Dendritic cell treated with granulocyte-macrophage colony-stimulating factor and Interleukin-4, amounts not matched to agents 40 ng/mL and 50 ng/mL, for 4 days (primary cell): ENCODE measurements at regions of chr18 and their contacts with region 1.

Region 1: DNA sequence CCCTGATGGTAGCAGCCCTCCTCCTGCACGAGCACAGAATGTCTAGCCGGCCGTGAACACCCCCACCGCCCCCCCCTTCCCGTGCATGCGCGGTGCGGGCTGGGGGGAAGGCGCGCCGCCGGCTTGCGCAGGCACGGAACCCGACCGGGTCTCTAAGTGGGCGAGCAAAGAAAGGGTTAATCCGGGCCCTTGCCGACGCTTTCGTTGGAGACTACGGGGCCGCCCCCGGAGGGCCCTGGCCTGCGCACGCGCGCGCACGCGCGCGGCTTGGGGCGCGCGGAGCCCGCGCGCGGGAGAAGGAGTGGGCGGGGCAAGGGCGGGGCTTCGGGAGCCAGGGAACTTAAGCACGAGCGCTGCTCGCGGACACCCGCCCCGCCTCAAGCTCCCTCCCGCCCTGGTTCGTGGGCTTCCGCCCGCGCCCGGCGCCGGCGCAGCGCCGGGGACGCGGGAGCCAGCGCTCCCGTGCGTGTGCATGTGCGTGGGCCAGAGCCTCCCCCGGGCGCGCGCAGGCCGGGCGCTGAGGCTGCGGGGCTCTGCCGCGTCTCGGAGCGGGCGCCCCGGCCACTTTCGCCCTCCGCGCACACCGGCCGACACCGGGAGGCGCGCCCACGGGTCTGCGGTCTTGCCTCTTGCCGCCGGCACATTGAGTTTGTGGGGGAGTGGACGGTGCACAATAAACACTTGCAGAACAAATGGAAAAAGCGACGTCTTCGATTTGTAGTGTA is 617 bp upstream of the ZBTB14 start:
- H3K4me3 Mint-ChIP-seq: peak overlapping the region; percentile 92
- H3K27ac Mint-ChIP-seq: peak overlapping the region; percentile 99
- H3K4me1 Mint-ChIP-seq: peaks cover 31% of the 10 kb centered on the region
- H3K27me3 Mint-ChIP-seq: no peaks in the 10 kb centered on the region

Region 2: GRCh38 chr18:5137261-5137660 is 158.9 kb before region 1 on chr18:
- intact Hi-C with region 1: no loop called
- H3K4me3 Mint-ChIP-seq: no peak overlapping the region
- H3K27ac Mint-ChIP-seq: no peak overlapping the region
- H3K4me1 Mint-ChIP-seq: no peaks in the 10 kb centered on the region
- H3K27me3 Mint-ChIP-seq: no peaks in the 10 kb centered on the region

Region 3: DNA sequence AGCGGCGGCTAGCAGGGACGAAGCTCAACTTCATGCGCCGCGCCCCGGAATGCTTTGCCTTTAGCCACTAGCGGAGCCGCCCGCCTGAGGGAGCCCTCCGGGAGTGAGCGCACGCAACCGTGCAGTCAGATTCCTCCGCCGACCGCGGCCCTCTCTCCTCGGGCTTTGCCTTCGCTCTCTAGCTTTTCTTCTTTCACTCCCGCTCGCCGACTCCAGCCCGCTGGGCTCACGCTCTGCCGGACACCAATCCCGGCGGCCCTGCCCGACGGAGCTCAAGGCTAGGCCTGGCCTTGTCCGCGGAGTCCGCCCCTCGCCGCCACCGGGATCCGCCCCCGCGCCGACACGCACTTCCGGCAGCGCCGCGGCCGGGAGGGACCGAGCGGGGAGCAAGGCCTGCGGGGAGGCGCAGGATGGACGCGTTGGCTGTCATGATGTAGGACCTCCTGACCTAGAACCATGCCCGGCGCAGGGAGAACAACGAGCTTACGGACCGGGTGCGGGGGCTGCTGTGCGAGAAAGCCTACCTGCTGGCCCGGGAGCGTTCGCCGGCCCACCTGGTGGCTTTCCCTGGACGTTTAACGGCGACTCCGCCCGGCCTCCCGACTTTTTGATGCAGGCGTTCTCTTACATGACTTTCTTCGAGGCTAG is 58.3 kb before region 1 on chr18:
- intact Hi-C with region 1: loop called (anchors 1 kb)
- H3K4me3 Mint-ChIP-seq: peak overlapping the region; percentile 96
- H3K27ac Mint-ChIP-seq: peak overlapping the region; percentile 100
- H3K4me1 Mint-ChIP-seq: peaks cover 23% of the 10 kb centered on the region
- H3K27me3 Mint-ChIP-seq: peaks cover 12% of the 10 kb centered on the region

Region 4: GRCh38 chr18:5417342-5417741 is 121.2 kb after region 1 on chr18:
- intact Hi-C with region 1: loop called (anchors 10 kb)
- H3K4me3 Mint-ChIP-seq: peak overlapping the region; percentile 24
- H3K27ac Mint-ChIP-seq: peak overlapping the region; percentile 61
- H3K4me1 Mint-ChIP-seq: peaks cover 41% of the 10 kb centered on the region
- H3K27me3 Mint-ChIP-seq: no peaks in the 10 kb centered on the region

Region 5: GRCh38 chr18:5439986-5440696 is 144.0 kb after region 1 on chr18:
- intact Hi-C with region 1: loop called (anchors 10 kb)
- H3K4me3 Mint-ChIP-seq: no peak overlapping the region
- H3K27ac Mint-ChIP-seq: peak overlapping the region; percentile 79
- H3K4me1 Mint-ChIP-seq: peaks cover 40% of the 10 kb centered on the region
- H3K27me3 Mint-ChIP-seq: no peaks in the 10 kb centered on the region

Region 6: DNA sequence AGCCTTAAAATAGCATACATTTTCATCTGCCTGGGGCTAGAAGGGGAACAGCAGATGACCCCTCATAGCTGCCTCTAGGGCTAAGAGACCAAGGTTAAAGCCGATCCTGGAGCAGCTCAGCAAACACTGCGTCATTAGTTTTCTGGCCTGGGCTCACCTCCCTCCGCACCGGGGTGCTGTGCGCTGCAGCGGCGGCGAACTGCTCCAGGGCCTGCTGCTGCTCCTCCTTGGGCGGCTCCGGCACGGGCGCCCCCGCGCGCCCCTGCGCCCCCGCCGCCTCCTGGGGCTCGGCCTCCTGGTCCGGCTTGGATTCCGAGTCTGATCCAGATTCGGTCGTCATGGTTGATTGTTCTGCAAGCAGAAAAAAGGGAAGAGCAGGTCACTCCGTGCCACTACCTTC is 192.7 kb after region 1 on chr18:
- intact Hi-C with region 1: no loop called
- H3K4me3 Mint-ChIP-seq: no peak overlapping the region
- H3K27ac Mint-ChIP-seq: no peak overlapping the region
- H3K4me1 Mint-ChIP-seq: peaks cover 23% of the 10 kb centered on the region
- H3K27me3 Mint-ChIP-seq: no peaks in the 10 kb centered on the region

Region 7: DNA sequence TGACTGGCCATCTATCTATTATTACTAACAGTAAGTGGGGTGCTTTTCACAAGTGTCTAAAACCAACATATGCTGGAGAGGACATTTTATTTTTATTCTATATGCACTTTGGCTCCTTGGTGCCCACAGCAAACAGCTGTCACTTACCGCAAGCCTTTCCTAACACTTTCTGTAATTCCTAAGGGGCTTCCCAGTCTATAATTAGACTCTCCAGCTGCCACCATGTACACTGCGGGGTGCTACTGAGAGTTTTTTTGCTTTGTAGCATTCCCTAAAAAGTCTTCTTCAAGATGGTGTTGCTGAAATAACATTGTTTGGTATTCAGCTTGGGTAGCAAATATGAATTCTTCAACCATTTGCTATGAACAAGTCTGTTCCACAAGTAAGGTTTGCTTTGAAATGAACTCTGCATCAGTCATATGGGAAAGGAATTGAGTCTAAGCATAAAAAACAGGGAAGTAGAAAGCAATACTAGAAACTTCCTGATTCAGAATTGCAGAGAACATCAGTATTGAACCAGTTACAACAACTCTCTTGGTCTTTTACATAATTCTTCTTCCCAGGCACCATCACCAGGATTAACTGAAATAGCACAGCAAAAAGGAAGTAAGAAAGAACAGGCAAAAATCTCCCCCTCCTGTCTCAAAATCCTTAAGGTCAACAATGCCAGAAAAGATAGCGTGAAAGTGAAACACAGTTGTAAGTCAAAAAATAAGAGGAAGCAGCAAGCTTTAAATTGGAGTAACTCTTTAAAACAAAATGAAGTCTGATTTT is 219.1 kb after region 1 on chr18:
- intact Hi-C with region 1: loop called (anchors 10 kb)
- H3K4me3 Mint-ChIP-seq: peak overlapping the region; percentile 48
- H3K27ac Mint-ChIP-seq: peak overlapping the region; percentile 82
- H3K4me1 Mint-ChIP-seq: peaks cover 63% of the 10 kb centered on the region
- H3K27me3 Mint-ChIP-seq: no peaks in the 10 kb centered on the region